CD14-positive monocyte (primary cell): ENCODE measurements at regions of chr10 and their contacts with region 1.

Region 1: GRCh38 chr10:50624866-50625692 is 1.3 kb upstream of the SGMS1 start:
- DNase-seq: peak; percentile 65 to 82 (median 77)
- H3K4me3 ChIP-seq: peak overlapping the region; percentile 71 to 86 (median 77)
- H3K4me3 Mint-ChIP-seq: peak overlapping the region; percentile 88 to 93
- H3K27ac ChIP-seq: peak overlapping the region; percentile 98 to 100
- H3K27ac Mint-ChIP-seq: peak overlapping the region; percentile 91 to 99 (median 94)
- H3K4me1 ChIP-seq: peaks cover 19 to 28% of the 10 kb centered on the region in 2 donors
- H3K4me1 Mint-ChIP-seq: peaks cover 26% of the 10 kb centered on the region
- H3K27me3 ChIP-seq: no peaks in the 10 kb centered on the region
- H3K27me3 Mint-ChIP-seq: peaks cover 0 to 2% (median 0%) of the 10 kb centered on the region in 3 donors
- CTCF ChIP-seq: peak; percentile 48

Region 2: DNA sequence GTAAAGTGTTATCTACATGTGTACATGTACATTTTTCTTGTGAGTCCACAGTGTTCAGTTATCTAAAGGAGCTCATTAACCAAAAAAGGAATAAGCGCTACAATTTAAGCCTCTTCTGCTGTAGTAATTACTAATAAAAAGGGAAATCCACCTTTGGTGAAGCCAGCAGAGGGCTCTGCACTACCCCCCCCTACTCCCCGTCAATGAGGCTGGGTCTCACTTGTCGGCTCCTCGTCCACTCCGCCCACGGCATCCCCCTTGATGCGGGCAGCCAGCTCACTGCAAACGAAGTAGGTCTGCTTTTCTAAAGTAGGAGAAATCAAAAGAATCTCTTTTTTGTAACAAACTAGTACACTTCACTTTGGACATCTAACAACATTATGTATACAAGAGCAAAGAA is 562.0 kb before region 1 on chr10:
- intact Hi-C with region 1: loop called in 1 of 2 experiments (anchors 10 kb)
- DNase-seq: no peak
- H3K4me3 ChIP-seq: no peak overlapping the region
- H3K4me3 Mint-ChIP-seq: peak overlapping the region in 1 of 2 donors; percentile 65
- H3K27ac ChIP-seq: no peak overlapping the region
- H3K27ac Mint-ChIP-seq: no peak overlapping the region
- H3K4me1 ChIP-seq: peaks cover 0 to 3% of the 10 kb centered on the region in 2 donors
- H3K4me1 Mint-ChIP-seq: peaks cover 9% of the 10 kb centered on the region
- H3K27me3 ChIP-seq: no peaks in the 10 kb centered on the region
- H3K27me3 Mint-ChIP-seq: peaks cover 3 to 6% (median 4%) of the 10 kb centered on the region in 3 donors
- CTCF ChIP-seq: no peak

Region 3: GRCh38 chr10:50536617-50537240 is 88.3 kb before region 1 on chr10:
- intact Hi-C with region 1: no loop called
- DNase-seq: no peak
- H3K4me3 ChIP-seq: no peak overlapping the region
- H3K4me3 Mint-ChIP-seq: no peak overlapping the region
- H3K27ac ChIP-seq: no peak overlapping the region
- H3K27ac Mint-ChIP-seq: no peak overlapping the region
- H3K4me1 ChIP-seq: peaks cover 4 to 7% of the 10 kb centered on the region in 2 donors
- H3K4me1 Mint-ChIP-seq: peaks cover 21% of the 10 kb centered on the region
- H3K27me3 ChIP-seq: no peaks in the 10 kb centered on the region
- H3K27me3 Mint-ChIP-seq: peaks cover 0 to 2% (median 0%) of the 10 kb centered on the region in 3 donors
- CTCF ChIP-seq: no peak

Region 4: GRCh38 chr10:50788951-50789945 is 164.2 kb after region 1 on chr10:
- intact Hi-C with region 1: no loop called
- DNase-seq: no peak
- H3K4me3 ChIP-seq: no peak overlapping the region
- H3K4me3 Mint-ChIP-seq: no peak overlapping the region
- H3K27ac ChIP-seq: no peak overlapping the region
- H3K27ac Mint-ChIP-seq: no peak overlapping the region
- H3K4me1 ChIP-seq: no peaks in the 10 kb centered on the region
- H3K4me1 Mint-ChIP-seq: no peaks in the 10 kb centered on the region
- H3K27me3 ChIP-seq: no peaks in the 10 kb centered on the region
- H3K27me3 Mint-ChIP-seq: no peaks in the 10 kb centered on the region
- CTCF ChIP-seq: no peak